H1 (cell line): ENCODE measurements at regions of chr17 and their contacts with region 1.

Region 1: DNA sequence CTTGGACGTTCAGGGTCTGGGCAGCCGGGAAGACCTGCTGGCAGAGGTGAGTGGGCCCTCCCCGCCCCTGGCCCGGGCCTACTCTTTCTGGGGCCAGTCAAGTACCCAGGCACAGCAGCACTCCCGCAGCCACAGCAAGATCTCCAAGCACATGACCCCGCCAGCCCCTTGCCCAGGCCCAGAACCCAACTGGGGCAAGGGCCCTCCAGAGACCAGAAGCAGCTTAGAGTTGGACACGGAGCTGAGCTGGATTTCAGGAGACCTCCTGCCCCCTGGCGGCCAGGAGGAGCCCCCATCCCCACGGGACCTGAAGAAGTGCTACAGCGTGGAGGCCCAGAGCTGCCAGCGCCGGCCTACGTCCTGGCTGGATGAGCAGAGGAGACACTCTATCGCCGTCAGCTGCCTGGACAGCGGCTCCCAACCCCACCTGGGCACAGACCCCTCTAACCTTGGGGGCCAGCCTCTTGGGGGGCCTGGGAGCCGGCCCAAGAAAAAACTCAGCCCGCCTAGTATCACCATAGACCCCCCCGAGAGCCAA is 8.6 kb upstream of the ABCC3 start:
- DNase-seq: peak; percentile 73 to 87
- H3K4me3 ChIP-seq: no peak overlapping the region
- H3K27ac ChIP-seq: no peak overlapping the region
- H3K4me1 ChIP-seq: peaks cover 0 to 39% (median 18%) of the 10 kb centered on the region in 4 experiments; a peak in 6 of 7 replicates
- H3K27me3 ChIP-seq: peaks cover 0 to 2% (median 0%) of the 10 kb centered on the region in 4 experiments; a peak in 3 of 7 replicates
- CTCF ChIP-seq: peak; percentile 92 to 97 (median 92)
- EP300 ChIP-seq: no peak
- POLR2A ChIP-seq: no peak
- RAD21 ChIP-seq: peak; percentile 86 to 92

Region 2: DNA sequence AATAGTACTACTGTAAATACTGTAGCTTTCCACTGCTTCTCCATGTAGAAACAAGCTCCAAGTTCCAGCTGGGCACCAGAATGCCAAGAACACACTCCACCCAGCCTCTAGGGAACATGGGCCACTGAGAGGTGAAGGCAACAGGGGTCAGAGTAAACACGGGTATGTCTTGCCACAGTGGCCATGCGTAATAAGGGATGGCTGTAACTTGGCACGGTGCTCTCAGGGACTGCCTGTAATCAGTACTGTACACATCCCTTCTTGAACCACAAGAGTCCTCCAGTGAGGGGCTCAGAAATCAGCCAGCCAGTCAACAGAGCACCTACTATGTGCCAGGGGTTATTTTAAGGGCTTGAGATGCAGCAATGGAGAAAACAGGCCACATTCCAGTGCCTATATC is 239.6 kb before region 1 on chr17:
- CTCF ChIA-PET with region 1: no interaction called
- POLR2A ChIA-PET with region 1: no interaction called
- DNase-seq: no peak
- H3K4me3 ChIP-seq: no peak overlapping the region
- H3K27ac ChIP-seq: no peak overlapping the region
- H3K4me1 ChIP-seq: no peaks in the 10 kb centered on the region
- H3K27me3 ChIP-seq: no peaks in the 10 kb centered on the region
- CTCF ChIP-seq: no peak
- EP300 ChIP-seq: no peak
- POLR2A ChIP-seq: no peak
- RAD21 ChIP-seq: no peak

Region 3: DNA sequence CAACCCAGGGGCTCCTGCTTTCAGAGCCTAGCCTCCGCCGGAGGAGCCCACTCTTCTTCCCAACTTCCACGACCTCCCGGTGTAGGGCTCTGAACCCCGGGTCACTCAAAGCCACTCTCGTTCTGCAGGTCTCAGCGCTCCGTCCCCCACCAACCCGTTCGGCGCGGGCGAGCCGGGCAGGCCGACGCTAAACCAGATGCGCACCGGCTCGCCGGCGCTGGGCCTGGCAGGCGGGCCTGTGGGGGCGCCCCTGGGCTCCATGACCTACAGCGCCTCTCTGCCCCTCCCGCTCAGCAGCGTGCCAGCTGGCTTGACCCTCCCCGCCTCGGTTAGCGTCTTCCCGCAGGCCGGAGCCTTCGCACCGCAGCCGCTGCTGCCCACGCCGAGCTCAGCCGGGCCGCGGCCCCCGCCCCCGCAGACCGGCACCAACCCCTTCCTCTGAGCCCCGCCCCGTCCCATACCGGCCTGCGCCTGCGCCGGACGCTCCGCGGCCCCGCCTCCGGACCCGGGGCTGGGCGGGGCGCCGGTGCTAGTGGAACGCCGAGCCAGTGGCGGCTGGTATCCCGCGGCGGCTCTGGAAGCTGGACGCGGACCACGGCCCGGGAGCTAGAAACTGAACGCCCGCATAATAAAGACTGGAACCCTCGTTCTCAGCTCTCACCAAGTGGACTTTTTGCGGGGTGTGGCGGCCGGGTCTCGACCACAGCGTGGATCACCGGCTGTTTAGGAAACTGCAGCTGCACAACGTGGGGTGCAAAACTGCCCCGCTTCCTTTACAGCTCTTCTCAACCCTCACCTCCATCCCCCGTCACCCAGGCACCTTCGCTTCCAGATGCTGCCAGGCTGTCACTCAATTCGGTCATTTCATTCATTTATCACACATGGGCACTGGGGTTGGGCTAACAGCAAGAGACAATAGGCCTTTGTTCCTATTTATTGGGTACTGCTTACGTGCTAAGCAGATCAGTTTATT is 84.1 kb before region 1 on chr17:
- CTCF ChIA-PET with region 1: interaction called, 404 read pairs
- POLR2A ChIA-PET with region 1: interaction called, 10 read pairs
- DNase-seq: peak in 1 of 2 experiments; percentile 92
- H3K4me3 ChIP-seq: peak overlapping the region; percentile 47 to 76 (median 73)
- H3K27ac ChIP-seq: no peak overlapping the region
- H3K4me1 ChIP-seq: peaks cover 2 to 19% (median 10%) of the 10 kb centered on the region in 4 experiments
- H3K27me3 ChIP-seq: peaks cover 0 to 6% (median 5%) of the 10 kb centered on the region in 4 experiments; a peak in 4 of 7 replicates
- CTCF ChIP-seq: peak in 1 of 3 experiments; percentile 11; a peak in 1 of 4 replicates
- EP300 ChIP-seq: no peak; a peak in 1 of 3 replicates
- POLR2A ChIP-seq: no peak
- RAD21 ChIP-seq: no peak; a peak in 1 of 4 replicates

Region 4: DNA sequence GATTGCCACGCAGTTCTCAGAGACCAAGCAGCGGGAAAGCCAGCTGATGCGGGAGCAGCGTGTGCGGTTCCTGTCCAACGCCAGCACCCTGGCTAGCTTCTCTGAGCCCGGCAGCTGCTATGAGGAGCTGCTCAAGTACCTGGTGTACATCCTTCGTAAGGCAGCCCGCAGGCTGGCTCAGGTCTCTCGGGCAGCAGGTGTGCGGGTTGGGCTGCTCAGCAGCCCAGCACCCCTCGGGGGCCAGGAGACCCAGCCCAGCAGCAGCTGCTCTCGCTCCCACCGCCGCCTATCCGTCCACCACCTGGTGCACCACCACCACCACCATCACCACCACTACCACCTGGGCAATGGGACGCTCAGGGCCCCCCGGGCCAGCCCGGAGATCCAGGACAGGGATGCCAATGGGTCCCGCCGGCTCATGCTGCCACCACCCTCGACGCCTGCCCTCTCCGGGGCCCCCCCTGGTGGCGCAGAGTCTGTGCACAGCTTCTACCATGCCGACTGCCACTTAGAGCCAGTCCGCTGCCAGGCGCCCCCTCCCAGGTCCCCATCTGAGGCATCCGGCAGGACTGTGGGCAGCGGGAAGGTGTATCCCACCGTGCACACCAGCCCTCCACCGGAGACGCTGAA is 50.4 kb before region 1 on chr17:
- CTCF ChIA-PET with region 1: interaction called, 95 read pairs
- POLR2A ChIA-PET with region 1: no interaction called
- DNase-seq: peak in 1 of 2 experiments; percentile 73
- H3K4me3 ChIP-seq: no peak overlapping the region
- H3K27ac ChIP-seq: no peak overlapping the region
- H3K4me1 ChIP-seq: peaks cover 0 to 8% (median 5%) of the 10 kb centered on the region in 4 experiments; a peak in 4 of 7 replicates
- H3K27me3 ChIP-seq: no peaks in the 10 kb centered on the region
- CTCF ChIP-seq: peak; percentile 29 to 36 (median 36); a peak in 3 of 4 replicates
- EP300 ChIP-seq: no peak
- POLR2A ChIP-seq: no peak
- RAD21 ChIP-seq: peak in 1 of 2 experiments; percentile 31; a peak in 3 of 4 replicates

Region 5: DNA sequence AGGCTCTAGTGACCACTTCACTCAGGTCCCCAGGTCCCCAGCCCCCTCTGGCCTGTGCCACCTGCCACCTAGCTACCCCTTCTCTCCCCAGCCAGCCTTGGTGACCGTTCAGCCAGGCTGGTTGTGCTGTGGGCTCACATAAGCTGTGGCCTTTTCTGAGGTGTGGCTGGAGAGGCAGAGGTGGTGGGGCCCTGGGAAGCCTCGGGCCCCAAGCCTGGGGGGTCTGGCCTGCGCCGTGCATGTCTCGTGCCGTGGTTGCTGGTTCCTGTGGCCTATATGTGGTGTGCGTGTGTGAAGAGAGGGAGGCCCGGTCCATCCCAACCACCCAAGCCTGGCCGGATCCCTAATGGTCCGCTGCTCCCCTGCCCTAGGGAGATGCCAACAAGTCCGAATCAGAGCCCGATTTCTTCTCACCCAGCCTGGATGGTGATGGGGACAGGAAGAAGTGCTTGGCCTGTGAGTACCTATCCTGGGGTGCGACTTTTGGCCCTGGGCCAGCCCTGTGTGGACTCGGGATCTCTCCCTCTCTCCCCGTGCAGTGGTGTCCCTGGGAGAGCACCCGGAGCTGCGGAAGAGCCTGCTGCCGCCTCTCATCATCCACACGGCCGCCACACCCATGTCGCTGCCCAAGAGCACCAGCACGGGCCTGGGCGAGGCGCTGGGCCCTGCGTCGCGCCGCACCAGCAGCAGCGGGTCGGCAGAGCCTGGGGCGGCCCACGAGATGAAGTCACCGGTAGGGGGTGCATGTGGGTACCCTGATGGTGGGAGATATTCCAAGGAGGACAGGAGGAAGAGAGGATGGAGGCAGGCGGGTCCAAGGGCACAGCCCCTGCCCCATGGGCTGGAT is 29.7 kb before region 1 on chr17:
- CTCF ChIA-PET with region 1: interaction called, 300 read pairs
- POLR2A ChIA-PET with region 1: interaction called, 3 read pairs
- DNase-seq: peak; percentile 38 to 88
- H3K4me3 ChIP-seq: no peak overlapping the region
- H3K27ac ChIP-seq: no peak overlapping the region
- H3K4me1 ChIP-seq: peaks cover 0 to 12% (median 7%) of the 10 kb centered on the region in 4 experiments; a peak in 6 of 7 replicates
- H3K27me3 ChIP-seq: no peaks in the 10 kb centered on the region; a peak in 1 of 7 replicates
- CTCF ChIP-seq: peak; percentile 74 to 83 (median 79)
- EP300 ChIP-seq: no peak
- POLR2A ChIP-seq: no peak
- RAD21 ChIP-seq: peak; percentile 37 to 68

Region 6: GRCh38 chr17:50649042-50649904 is 23.2 kb after region 1 on chr17:
- CTCF ChIA-PET with region 1: interaction called, 26 read pairs
- POLR2A ChIA-PET with region 1: interaction called, 3 read pairs
- DNase-seq: no peak
- H3K4me3 ChIP-seq: no peak overlapping the region
- H3K27ac ChIP-seq: no peak overlapping the region
- H3K4me1 ChIP-seq: no peaks in the 10 kb centered on the region
- H3K27me3 ChIP-seq: no peaks in the 10 kb centered on the region
- CTCF ChIP-seq: no peak
- EP300 ChIP-seq: no peak
- POLR2A ChIP-seq: no peak
- RAD21 ChIP-seq: no peak

Region 7: DNA sequence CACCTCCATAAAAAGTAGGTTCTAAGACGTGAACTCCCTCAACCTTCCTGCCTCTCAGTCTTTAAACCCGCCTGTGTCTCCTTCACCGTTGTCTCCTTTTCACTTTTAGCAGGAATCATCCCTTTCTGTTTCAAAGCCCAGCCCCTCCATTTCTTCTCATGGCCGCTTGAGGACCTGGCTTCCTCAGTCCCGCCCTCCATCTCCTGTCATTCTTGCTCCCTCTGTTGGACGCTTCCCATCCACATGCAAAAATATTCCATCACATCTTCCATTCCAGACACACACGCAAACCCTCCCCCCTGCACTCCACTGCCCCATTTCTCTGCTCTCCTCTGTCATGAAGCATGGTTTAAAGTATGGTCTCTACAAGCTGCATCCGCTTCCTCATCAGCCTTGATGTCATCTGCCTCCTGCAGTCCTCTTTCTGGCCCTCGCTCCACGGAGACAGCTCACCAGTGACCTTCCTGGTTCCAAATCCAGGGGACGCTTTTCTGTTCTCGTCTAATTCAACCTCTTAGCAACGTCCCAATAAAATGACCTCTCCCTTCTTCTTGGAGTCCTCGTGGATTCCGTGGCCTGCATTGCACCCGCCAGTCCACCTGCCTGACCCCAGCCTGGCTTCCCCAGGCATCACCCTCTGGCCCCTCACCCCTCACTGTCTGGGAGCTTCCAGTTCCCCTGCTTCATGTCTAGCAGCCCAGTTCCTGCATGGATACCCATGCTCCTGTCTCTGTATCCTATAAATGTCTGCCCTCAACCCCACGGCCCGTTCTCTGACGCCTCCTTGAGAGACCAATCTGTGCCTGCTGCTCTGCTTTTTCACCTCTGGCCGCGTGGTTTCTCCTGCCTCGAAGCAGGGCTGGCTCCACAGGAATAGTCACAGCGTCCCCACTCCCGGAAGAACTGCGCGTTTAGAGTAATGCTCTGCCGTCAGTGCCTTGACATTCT is 55.4 kb after region 1 on chr17:
- CTCF ChIA-PET with region 1: interaction called, 391 read pairs
- POLR2A ChIA-PET with region 1: no interaction called
- DNase-seq: no peak
- H3K4me3 ChIP-seq: no peak overlapping the region
- H3K27ac ChIP-seq: no peak overlapping the region
- H3K4me1 ChIP-seq: peaks cover 0 to 10% (median 1%) of the 10 kb centered on the region in 4 experiments; a peak in 3 of 7 replicates
- H3K27me3 ChIP-seq: no peaks in the 10 kb centered on the region
- CTCF ChIP-seq: peak; percentile 13 to 51 (median 45)
- EP300 ChIP-seq: no peak
- POLR2A ChIP-seq: no peak
- RAD21 ChIP-seq: peak; percentile 37 to 51

Region 8: DNA sequence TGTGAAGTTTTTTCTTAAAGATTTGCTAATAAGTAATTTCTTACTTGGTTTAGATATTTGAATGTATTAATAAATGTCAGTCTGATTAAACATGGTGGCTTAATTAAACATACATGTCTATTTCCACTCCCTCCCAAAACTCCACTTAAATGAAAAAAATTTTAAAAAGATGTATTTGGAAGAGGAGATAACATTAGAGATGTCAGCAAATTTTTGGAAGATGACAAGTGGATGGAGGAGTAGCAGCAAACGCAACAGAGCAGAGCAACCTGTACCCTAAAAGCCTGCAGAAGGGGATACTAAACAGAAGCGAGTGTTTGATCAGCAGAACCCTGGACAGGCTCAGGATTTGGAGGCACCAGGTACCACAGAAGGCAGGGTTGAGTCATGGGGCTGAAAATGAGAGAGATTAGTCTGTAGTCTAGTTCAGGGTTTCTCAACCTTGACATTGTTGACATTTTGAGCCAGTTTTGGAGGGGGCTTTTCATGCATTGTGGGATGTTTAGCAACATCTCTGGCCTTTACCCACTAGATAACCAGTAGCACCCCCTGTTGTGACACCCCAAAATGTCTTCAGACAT is 111.1 kb after region 1 on chr17:
- CTCF ChIA-PET with region 1: no interaction called
- POLR2A ChIA-PET with region 1: no interaction called
- DNase-seq: no peak
- H3K4me3 ChIP-seq: no peak overlapping the region
- H3K27ac ChIP-seq: no peak overlapping the region; the same call in 1 of the 2 replicates
- H3K4me1 ChIP-seq: no peaks in the 10 kb centered on the region
- H3K27me3 ChIP-seq: no peaks in the 10 kb centered on the region
- CTCF ChIP-seq: no peak
- EP300 ChIP-seq: no peak
- POLR2A ChIP-seq: no peak
- RAD21 ChIP-seq: no peak

Region 9: GRCh38 chr17:50758989-50759544 is 133.0 kb after region 1 on chr17:
- CTCF ChIA-PET with region 1: no interaction called
- POLR2A ChIA-PET with region 1: no interaction called
- DNase-seq: no peak
- H3K4me3 ChIP-seq: no peak overlapping the region
- H3K27ac ChIP-seq: no peak overlapping the region
- H3K4me1 ChIP-seq: no peaks in the 10 kb centered on the region
- H3K27me3 ChIP-seq: no peaks in the 10 kb centered on the region
- CTCF ChIP-seq: no peak
- EP300 ChIP-seq: no peak
- POLR2A ChIP-seq: no peak
- RAD21 ChIP-seq: no peak